ENCODE measurements at regions of chr17 and their contacts with region 1.

Region 1: DNA sequence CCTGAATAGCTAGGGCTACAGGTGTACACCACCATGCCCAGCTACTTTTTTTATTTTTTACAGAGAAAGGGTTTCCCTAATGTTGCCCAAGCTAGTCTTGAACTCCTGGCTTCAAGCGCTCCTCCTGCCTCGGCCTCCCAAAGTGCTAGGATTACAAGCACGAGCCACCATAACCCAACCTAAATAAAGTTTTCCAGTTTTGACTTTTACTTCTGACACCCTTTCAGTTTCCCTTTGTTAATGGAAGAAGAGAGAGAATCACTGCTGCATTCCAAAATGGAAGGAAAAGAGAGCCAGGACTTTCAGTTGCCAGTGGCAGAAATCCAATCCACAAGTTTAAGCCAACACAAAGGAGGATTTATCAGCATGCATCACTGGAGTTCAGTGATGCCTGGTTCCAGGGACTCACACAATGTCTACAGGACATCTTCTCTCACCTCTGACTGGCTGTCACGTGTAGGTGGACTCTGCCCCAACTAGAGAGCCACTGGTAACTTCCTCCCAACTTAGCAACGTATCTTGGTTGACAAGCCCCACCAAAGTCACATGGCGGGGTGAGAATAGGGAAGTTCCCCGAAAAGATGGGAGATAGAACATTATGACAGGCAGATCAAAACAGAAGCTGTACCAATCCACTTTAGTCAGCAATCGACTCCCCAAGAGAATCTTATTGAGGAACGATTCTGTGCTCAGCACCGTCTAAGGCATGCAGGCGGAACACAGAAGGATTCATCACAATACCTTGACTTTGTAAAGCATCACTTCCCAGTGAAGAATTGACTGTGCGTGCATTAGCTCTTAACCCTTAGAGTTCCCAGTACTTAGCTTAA is 46.5 kb downstream of the GAS7 start:
- H3K4me3 Mint-ChIP-seq: no peak overlapping the region
- H3K27ac Mint-ChIP-seq: peak overlapping the region; percentile 87
- H3K4me1 Mint-ChIP-seq: peaks cover 63% of the 10 kb centered on the region
- H3K27me3 Mint-ChIP-seq: no peaks in the 10 kb centered on the region

Region 2: DNA sequence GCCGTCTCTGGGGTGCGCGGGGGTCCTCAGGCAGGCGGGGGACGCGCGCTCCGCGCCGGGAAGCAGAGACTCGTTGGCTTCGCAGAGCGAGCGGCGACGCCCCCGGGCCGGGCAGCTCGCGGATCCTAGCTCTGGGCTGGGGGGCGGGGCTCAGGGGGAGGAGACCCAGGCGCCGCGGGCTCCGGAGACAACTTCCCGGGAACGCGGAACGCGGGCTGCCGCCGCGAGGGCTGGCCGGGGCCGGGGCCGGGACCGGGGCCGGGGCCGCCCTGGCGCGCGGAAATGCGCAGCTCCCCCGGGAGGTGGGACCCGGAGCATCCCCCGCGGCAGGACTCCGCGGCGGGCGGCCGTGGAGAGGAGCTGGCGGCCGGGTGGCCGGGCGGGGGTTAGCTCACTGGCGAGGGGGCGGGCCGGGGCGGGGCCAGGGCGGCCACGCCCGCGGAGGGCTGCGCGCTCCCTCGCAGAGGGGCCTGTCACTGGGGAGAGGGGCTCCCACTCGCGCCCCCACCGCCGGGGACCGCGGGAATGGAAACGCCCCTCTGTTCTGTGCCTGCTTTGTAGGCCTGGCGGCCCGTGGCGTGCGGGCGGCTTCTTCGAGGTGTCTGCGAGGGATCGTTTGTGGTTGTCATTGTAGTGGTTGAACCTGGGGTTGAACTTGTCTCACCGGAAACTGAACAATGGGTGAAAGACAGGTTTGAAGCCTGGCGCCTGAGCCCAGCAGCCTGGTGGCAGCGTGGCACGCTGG is 46.8 kb after region 1 on chr17 and contains the start of gene GAS7:
- intact Hi-C with region 1: loop called (anchors 2 kb)
- H3K4me3 Mint-ChIP-seq: peak within 1 kb of the TSS; percentile 86
- H3K27ac Mint-ChIP-seq: peak within 1 kb of the TSS; percentile 42
- H3K4me1 Mint-ChIP-seq: peaks cover 38% of the 10 kb centered on the region
- H3K27me3 Mint-ChIP-seq: peaks cover 11% of the 10 kb centered on the region

Measured in dendritic cell treated with granulocyte-macrophage colony-stimulating factor and Interleukin-4, amounts not matched to agents 40 ng/mL and 50 ng/mL, for 4 days (primary cell).